ENCODE measurements at regions of chr2 and their contacts with region 1.

Region 1: GRCh38 chr2:70656421-70657010 is 102.9 kb upstream of the TGFA start:
- DNase-seq: no peak
- H3K4me3 Mint-ChIP-seq: no peak overlapping the region
- H3K27ac Mint-ChIP-seq: no peak overlapping the region
- H3K4me1 Mint-ChIP-seq: no peaks in the 10 kb centered on the region
- H3K27me3 Mint-ChIP-seq: peaks cover 57% of the 10 kb centered on the region
- CTCF ChIP-seq: no peak

Region 2: GRCh38 chr2:70671092-70671675 is 14.7 kb after region 1 on chr2:
- CTCF ChIA-PET with region 1: interaction called, 13 read pairs
- POLR2A ChIA-PET with region 1: no interaction called
- intact Hi-C with region 1: no loop called
- DNase-seq: no peak
- H3K4me3 Mint-ChIP-seq: no peak overlapping the region
- H3K27ac Mint-ChIP-seq: no peak overlapping the region
- H3K4me1 Mint-ChIP-seq: no peaks in the 10 kb centered on the region
- H3K27me3 Mint-ChIP-seq: no peaks in the 10 kb centered on the region
- CTCF ChIP-seq: no peak

Region 3: DNA sequence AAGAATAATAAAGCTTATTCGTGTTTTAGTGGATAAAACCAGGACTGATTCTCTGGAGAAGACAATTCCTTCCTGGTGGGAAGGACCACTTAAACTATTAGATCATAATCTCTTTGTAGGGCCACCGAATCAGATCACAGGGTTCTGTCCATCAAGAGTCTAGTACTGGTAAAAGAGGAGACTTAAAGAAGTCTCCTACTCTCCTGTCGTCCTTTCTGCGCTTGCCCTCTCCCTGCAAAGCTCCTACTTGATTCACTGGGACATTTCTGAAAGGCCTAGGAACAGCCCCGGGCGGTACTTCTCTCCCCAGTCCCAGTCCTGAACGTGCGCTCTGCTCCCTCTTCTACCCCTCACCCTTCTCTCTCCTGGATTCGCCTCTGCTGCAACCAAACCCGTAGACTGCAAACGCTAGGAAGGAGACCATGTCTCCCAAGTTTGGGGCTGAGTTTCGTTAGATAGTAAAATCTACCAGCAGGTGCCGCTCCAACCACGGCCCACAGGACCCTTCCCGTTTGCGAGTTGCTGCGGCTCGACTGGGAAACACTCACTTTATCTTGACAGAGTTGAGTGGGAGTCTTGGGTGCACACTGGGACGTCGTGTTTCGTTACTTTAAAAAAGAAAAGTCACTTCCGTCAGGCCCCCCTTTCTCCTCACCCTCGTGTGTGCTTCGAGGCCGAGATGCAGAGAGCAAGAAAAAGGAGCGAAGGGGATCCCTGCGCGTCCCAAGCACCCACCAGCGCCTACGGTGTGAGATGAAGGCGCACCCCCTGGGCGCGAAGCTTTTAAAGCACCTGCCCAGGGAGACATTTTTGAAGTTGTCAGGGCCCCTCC is 133.0 kb after region 1 on chr2:
- CTCF ChIA-PET with region 1: interaction called, 16 read pairs
- POLR2A ChIA-PET with region 1: interaction called, 3 read pairs
- intact Hi-C with region 1: loop called (anchors 1 kb)
- DNase-seq: peak; percentile 63
- H3K4me3 Mint-ChIP-seq: peak overlapping the region; percentile 52
- H3K27ac Mint-ChIP-seq: no peak overlapping the region
- H3K4me1 Mint-ChIP-seq: peaks cover 5% of the 10 kb centered on the region
- H3K27me3 Mint-ChIP-seq: peaks cover 56% of the 10 kb centered on the region
- CTCF ChIP-seq: peak; percentile 53

Region 4: DNA sequence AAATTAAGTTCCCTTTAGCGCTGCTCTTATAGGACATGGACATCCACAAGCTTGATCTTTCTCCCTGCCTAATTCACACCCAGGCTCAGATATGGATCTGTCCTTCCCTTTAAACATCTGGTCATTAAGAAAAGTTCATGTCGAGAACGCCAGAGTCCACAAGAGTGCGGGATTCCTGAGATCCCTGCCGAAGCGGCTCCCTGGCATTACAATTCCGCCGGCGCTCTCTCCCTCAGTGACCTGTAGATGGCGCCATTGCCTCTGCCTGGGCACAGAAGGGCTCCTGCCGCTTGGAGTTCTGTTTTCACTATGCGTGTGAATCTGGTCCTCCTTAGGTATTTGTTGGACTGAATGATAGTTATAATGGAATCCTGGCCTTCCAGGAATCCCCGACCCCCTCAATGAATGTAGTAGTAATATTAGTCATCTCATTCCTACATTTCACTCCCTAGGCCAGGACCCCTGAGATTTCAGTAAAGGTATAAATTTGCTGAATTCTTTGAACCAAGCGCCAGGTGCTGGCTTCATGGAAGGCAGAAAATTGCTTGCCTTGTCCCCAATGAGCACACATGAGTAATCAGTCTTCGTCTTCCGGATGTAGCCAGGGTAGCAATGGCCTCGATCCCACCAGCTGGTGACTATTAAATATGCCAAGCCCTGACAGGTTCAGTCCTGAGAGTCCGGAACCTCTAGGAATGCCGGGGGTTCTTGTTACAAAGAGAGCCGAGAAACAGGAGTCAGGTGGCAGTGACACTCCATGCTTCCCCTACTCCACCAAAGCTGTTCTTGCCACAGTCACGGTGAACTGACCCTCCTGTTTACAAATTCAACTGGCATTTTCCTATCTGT is 205.5 kb after region 1 on chr2:
- CTCF ChIA-PET with region 1: interaction called, 6 read pairs
- POLR2A ChIA-PET with region 1: no interaction called
- intact Hi-C with region 1: loop called (anchors 10 kb)
- DNase-seq: peak; percentile 83
- H3K4me3 Mint-ChIP-seq: no peak overlapping the region
- H3K27ac Mint-ChIP-seq: peak overlapping the region; percentile 17
- H3K4me1 Mint-ChIP-seq: peaks cover 6% of the 10 kb centered on the region
- H3K27me3 Mint-ChIP-seq: peaks cover 80% of the 10 kb centered on the region
- CTCF ChIP-seq: peak; percentile 94